Dendritic cell treated with granulocyte-macrophage colony-stimulating factor and Interleukin-4, amounts not matched to agents 40 ng/mL and 50 ng/mL, for 4 days (primary cell): ENCODE measurements at regions of chr17 and their contacts with region 1.

Region 1: DNA sequence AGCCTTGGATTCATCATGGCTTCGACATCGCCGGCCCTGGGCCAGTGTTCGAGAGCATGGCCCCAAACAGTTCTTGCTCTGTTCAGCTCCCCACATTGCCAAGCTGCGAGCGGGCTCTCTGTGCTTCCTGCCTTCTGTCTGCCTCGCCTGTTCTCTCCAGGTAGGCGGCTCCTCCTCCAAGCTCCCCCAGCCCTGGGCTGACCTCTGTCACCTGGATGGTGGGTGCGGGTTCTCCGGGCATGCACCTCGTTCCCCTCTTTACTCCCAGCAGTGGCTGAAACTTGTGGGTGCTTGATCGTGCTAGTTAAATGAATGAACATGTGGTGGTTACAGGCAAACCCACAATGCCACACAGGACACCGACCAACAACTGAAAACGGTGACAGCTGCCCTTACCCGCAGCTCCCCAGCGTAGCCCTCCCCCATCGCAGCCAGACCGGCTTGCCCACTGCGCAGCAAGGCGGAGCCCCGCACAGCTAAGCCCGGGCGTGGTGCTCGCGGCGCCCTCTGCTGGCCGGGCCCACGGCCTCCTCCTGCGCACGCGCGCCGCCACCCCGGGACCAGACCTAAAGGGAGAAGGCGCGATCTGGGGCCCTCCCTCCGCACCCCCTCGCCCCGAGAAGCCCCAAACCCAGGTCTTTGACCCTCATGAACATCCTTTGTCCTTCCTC is 23.0 kb upstream of the EIF1 start:
- H3K4me3 Mint-ChIP-seq: peak overlapping the region; percentile 73
- H3K27ac Mint-ChIP-seq: peak overlapping the region; percentile 90
- H3K4me1 Mint-ChIP-seq: peaks cover 54% of the 10 kb centered on the region
- H3K27me3 Mint-ChIP-seq: peaks cover 25% of the 10 kb centered on the region

Region 2: GRCh38 chr17:40803617-40804082 is 862.1 kb before region 1 on chr17:
- intact Hi-C with region 1: loop called (anchors 2 kb)
- H3K4me3 Mint-ChIP-seq: no peak overlapping the region
- H3K27ac Mint-ChIP-seq: no peak overlapping the region
- H3K4me1 Mint-ChIP-seq: no peaks in the 10 kb centered on the region
- H3K27me3 Mint-ChIP-seq: peaks cover 42% of the 10 kb centered on the region

Region 3: GRCh38 chr17:40915199-40915661 is 750.5 kb before region 1 on chr17:
- intact Hi-C with region 1: loop called (anchors 2 kb)
- H3K4me3 Mint-ChIP-seq: no peak overlapping the region
- H3K27ac Mint-ChIP-seq: no peak overlapping the region
- H3K4me1 Mint-ChIP-seq: peaks cover 46% of the 10 kb centered on the region
- H3K27me3 Mint-ChIP-seq: no peaks in the 10 kb centered on the region

Region 4: GRCh38 chr17:41486809-41487720 is 178.6 kb before region 1 on chr17:
- intact Hi-C with region 1: loop called (anchors 5 kb)
- H3K4me3 Mint-ChIP-seq: no peak overlapping the region
- H3K27ac Mint-ChIP-seq: no peak overlapping the region
- H3K4me1 Mint-ChIP-seq: peaks cover 47% of the 10 kb centered on the region
- H3K27me3 Mint-ChIP-seq: peaks cover 10% of the 10 kb centered on the region

Region 5: DNA sequence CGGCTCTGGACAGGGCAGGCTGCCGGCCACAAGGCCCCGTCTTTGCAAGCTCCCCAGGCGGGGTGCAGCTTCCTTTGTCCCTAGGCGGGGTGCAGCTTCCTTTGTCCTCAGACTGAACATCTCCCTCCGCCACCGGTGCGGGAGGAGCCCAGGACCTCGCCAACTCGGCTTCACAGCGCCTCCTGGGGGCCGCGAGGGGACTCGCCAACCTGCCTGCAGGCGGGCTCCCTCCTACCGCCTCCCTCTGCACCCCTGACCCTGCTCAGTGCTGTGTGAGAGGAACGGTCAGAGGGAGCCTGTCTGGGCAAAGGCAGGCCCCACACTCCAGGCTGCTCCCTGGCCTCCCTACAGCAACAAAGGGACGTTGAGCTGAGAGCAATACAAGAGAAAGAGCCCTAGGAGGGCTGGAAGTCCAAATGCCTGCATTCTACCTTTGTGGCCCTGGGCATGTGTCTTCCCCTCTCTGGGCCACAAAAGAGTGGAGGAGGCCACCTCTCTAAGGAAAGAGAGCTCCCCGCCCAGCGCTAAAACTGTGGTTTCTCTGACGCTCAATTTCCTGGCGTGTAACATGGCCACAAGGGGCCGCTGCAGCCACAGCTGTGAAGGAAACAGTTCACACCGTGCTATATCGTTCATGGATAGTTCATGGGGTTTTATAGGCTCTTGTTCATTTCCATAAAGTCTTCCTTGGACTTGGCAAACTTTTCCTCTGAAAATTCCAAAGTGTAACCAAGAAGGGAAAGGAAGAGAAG is 116.7 kb before region 1 on chr17:
- intact Hi-C with region 1: loop called (anchors 1 kb)
- H3K4me3 Mint-ChIP-seq: peak overlapping the region; percentile 27
- H3K27ac Mint-ChIP-seq: peak overlapping the region; percentile 18
- H3K4me1 Mint-ChIP-seq: peaks cover 23% of the 10 kb centered on the region
- H3K27me3 Mint-ChIP-seq: peaks cover 39% of the 10 kb centered on the region

Region 6: GRCh38 chr17:41579484-41580243 is 86.0 kb before region 1 on chr17:
- intact Hi-C with region 1: loop called (anchors 1 kb)
- H3K4me3 Mint-ChIP-seq: no peak overlapping the region
- H3K27ac Mint-ChIP-seq: peak overlapping the region; percentile 23
- H3K4me1 Mint-ChIP-seq: peaks cover 15% of the 10 kb centered on the region
- H3K27me3 Mint-ChIP-seq: peaks cover 54% of the 10 kb centered on the region

Region 7: DNA sequence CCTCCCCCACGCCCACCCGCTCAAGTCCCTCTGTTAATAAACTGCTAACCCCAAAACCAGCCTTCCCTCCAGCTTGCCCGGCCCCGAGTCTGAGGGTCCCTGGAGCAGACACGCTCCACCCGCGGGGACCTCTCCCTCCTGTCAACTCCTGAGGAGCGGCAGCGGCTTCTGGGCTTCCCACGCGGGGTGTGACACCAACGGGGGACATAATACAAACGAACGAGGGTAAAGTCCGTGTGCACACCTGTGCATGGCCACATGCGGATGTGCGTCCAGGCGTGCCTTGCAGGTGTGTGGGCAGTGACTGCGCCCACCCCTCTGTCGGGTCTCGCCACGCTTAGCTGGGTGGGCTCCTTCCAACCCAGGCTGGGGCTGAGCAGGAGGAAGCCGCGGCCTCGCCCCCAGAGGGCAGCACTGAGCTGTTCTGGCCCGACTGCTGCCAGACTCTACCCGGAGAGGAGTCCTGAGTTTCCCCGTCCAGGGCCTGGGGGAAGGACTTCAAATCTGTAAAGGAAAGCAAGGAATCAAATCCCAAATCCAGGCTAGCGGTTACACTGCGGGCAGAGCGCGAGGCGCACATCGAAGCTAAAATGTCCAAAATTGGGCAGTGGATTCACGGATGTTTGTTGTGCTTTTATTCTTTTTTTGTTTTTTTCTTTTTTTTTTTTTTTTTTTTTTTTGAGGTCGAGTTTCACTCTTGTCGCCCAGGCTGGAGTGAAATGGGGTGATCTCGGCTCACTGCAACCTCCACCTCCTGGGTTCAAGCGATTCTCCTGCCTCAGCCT is 17.1 kb before region 1 on chr17:
- intact Hi-C with region 1: loop called (anchors 1 kb)
- H3K4me3 Mint-ChIP-seq: peak overlapping the region; percentile 69
- H3K27ac Mint-ChIP-seq: peak overlapping the region; percentile 69
- H3K4me1 Mint-ChIP-seq: peaks cover 51% of the 10 kb centered on the region
- H3K27me3 Mint-ChIP-seq: peaks cover 8% of the 10 kb centered on the region